ENCODE measurements at regions of chr11 and their contacts with region 1.

Region 1: GRCh38 chr11:12963792-12964536 is 45.2 kb upstream of the RASSF10 start:
- DNase-seq: peak; percentile 90
- H3K4me3 ChIP-seq: no peak overlapping the region
- H3K27ac ChIP-seq: no peak overlapping the region
- H3K4me1 ChIP-seq: peaks cover 0 to 5% (median 5%) of the 10 kb centered on the region in 4 donors
- H3K27me3 ChIP-seq: peaks cover 0 to 12% (median 0%) of the 10 kb centered on the region in 4 donors
- CTCF ChIP-seq: peak; percentile 77 to 95 (median 83)
- EP300 ChIP-seq: no peak
- POLR2A ChIP-seq: no peak

Region 2: DNA sequence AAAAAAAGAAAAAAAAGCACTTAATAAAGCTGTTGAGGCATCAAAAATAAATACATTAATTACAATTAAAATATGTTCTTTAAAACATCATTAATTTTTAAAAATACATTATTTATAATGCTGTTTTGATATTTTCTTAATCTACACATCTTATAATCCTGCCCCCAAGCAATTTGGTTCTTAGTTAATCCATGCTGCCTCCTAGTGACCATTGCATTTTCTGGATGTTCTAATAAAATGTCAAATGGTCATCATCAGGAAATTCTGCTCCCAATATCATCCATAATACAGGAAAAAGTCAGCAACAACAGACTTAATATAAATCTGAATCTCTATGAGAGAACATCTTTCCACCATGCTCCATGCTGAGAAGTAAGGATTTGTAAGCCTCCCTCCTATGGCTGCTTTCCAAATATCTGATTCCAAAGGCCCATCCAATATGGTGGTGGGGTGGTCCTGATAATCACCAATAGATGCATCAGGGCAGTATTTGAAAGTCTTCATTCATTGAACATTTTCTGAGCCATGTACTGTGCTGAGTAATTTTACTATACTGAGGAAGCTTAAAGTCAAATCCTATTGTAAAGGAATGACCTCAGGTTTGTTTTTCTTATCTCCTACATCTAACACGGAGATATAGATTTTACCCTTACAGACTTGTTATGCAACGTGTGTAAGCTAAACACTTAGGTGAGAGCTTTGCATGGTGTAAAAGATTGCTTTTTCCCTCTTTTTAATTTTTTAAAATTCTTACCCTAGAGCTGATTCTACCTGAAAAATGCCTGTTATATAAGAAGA is 189.0 kb after region 1 on chr11:
- intact Hi-C with region 1: loop called (anchors 10 kb)
- DNase-seq: no peak
- H3K4me3 ChIP-seq: no peak overlapping the region
- H3K27ac ChIP-seq: no peak overlapping the region
- H3K4me1 ChIP-seq: peaks cover 0 to 6% (median 0%) of the 10 kb centered on the region in 4 donors
- H3K27me3 ChIP-seq: no peaks in the 10 kb centered on the region
- CTCF ChIP-seq: peak in 2 of 3 experiments; percentile 6 to 24
- EP300 ChIP-seq: no peak
- POLR2A ChIP-seq: no peak

Region 3: DNA sequence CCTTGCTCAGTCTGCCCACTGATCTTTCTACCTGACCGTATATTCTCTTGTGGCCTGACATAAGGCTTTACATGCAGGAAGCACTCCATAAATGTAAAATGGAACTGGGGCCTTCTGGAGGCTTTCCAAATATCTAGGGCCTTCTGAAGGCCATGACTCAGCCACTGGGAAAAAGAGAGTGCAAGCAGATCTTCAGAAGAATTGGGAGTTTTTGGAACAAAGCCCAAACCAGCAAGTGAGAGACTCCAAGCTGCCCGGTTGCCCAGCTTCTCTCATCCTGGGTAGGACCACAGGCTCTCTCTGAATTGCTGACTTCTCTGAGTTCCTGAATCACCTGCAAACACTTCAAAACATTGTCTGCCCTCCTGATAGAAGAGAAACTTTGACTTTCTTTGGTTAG is 205.7 kb after region 1 on chr11:
- intact Hi-C with region 1: no loop called
- DNase-seq: peak; percentile 77
- H3K4me3 ChIP-seq: no peak overlapping the region
- H3K27ac ChIP-seq: no peak overlapping the region
- H3K4me1 ChIP-seq: no peaks in the 10 kb centered on the region
- H3K27me3 ChIP-seq: no peaks in the 10 kb centered on the region
- CTCF ChIP-seq: no peak
- EP300 ChIP-seq: no peak
- POLR2A ChIP-seq: no peak

Region 4: DNA sequence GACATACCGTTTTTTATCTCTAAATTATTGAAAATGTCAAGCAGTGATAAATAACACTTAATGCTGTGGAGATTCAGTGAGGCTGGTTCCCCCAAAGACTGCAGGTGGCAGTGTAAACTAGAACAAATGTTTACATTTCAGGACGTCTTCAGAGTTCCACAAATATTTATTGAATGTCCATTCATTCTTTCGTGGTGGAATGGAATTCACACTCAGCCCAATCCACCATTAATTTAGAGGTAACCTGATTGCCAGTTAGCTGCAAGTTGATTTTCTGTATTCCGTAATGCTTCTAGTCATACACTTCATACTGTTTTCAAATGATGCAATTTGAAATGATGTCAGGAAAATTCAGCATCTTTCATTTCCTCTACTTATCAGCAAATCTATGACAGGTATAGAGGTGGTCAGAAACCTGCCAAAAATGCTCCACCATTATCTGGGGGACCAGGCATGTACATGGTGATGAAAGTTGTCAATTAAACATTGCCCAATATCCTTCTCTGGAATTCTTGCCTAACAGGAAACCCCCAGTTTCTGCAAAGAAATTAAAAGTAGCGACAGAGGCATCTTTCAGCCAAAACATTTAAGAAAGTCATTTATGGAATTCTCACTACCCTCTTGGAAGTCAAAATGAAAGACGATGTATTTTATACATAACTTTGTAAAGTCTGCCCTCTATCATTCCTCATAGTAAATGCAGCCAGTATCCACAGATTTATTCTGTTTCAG is 219.3 kb after region 1 on chr11:
- intact Hi-C with region 1: loop called (anchors 2 kb)
- DNase-seq: no peak
- H3K4me3 ChIP-seq: peak overlapping the region in 2 of 4 donors; percentile 6 to 26
- H3K27ac ChIP-seq: no peak overlapping the region
- H3K4me1 ChIP-seq: peaks cover 4 to 9% (median 8%) of the 10 kb centered on the region in 4 donors
- H3K27me3 ChIP-seq: no peaks in the 10 kb centered on the region
- CTCF ChIP-seq: peak; percentile 37 to 56 (median 45)
- EP300 ChIP-seq: no peak
- POLR2A ChIP-seq: no peak